ENCODE measurements at regions of chr17 and their contacts with region 1.

Region 1: DNA sequence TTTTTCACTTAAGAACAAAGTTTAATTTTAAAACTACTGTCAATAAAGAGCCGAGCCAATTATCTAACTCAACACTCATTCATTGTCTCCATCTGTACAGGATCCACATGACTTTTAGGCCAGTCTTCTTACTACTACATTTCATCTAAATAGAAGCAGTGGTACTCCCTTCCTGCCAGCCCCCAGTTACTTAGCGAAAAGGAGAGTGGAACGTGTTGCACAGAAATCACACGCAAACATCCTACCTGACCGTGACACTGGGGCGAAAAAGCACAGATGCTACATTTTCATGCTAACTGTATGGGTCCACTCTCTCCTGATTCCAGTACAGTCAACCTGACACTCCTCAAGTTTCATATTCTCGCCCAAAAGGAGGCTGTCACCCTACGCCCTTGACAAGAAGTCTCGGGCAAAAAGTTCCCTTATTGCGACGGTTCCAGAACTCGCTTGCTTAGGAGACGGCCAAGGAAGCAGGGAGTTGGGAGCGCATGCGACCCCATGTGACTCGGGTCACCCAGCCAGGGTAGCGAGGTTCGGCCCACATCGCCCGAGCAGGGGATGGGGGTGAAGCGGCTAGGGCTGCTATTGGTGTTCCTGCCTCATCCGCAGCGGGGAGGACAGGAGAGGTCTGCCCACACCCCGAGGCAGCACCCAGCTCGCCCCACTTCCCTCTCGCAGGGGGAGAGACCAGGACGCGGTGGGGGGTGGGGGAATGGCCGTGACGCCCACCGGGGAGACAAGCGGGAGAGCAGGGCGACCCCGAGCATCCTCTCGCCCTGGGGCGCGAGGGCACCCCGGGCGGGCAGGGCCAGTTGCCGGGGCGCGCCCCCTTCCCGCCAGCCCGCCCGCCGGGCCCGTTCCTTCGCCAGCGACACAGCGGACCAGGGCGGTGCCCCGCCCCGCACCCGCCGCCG is 935 bp downstream of the GNA13 start:
- DNase-seq: peak; percentile 27
- ATAC-seq: peak; percentile 68
- H3K4me3 ChIP-seq: peak overlapping the region; percentile 81 to 98 (median 92)
- H3K27ac ChIP-seq: peak overlapping the region; percentile 96
- H3K4me1 ChIP-seq: peaks cover 36% of the 10 kb centered on the region
- H3K27me3 ChIP-seq: no peaks in the 10 kb centered on the region; a peak in 1 of 5 replicates
- CTCF ChIP-seq: 0 out of 2 replicates have a peak, but pooled peaks have one; percentile 3
- EP300 ChIP-seq: no peak
- POLR2A ChIP-seq: 0 out of 4 replicates have a peak, but pooled peaks of 1 of the 2 experiments have one; percentile 8
- RAD21 ChIP-seq: no peak

Region 2: DNA sequence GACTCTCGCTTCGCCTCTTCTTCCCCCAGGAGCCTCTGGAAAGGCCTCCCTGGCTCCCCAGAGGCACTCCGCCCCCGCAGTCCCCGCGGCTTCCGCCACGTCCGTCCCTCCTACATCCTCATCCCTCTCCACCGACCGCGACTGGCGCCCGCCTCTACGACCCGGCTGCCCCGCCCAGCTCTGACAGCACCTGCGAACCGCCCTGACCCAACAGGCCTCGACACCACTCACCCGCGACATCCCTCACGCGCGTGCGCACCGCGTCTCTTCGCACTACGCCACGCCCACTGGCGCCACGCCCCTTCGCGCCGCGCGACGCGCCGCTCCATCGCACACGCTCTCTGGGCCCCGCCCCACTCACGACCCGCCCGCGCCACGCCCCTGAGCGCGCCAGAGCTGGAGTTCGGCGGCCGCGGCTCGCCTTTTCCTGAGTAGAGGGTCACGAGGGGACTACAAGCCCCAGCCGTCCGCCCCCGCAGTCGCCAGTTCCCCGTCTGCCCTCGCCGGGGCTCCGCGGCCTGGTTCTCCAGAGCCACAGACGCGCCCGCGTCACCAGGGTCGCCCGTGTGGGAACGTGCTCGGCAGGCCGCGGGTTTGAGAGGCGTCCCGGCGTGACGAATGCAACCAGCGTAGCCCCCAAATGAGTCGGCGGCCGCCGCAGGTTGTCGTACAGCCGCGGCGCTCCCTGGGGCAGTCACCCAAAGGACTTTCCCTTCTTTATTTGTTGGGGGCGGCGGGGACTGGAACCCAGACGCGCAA is 80.1 kb before region 1 on chr17:
- CTCF ChIA-PET with region 1: no interaction called
- POLR2A ChIA-PET with region 1: interaction called, 21 read pairs
- in situ Hi-C with region 1: no loop called
- intact Hi-C with region 1: loop called (anchors 10 kb)
- DNase-seq: peak; percentile 87
- ATAC-seq: peak; percentile 93
- H3K4me3 ChIP-seq: peak overlapping the region; percentile 58 to 86 (median 82)
- H3K27ac ChIP-seq: peak overlapping the region; percentile 71
- H3K4me1 ChIP-seq: peaks cover 29% of the 10 kb centered on the region
- H3K27me3 ChIP-seq: no peaks in the 10 kb centered on the region
- CTCF ChIP-seq: no peak; the same call in 1 of the 2 replicates
- EP300 ChIP-seq: no peak
- POLR2A ChIP-seq: peak; percentile 60 to 95
- RAD21 ChIP-seq: peak; percentile 33

Region 3: GRCh38 chr17:65074778-65075250 is 19.2 kb after region 1 on chr17:
- CTCF ChIA-PET with region 1: no interaction called
- POLR2A ChIA-PET with region 1: interaction called, 31 read pairs
- in situ Hi-C with region 1: no loop called
- intact Hi-C with region 1: no loop called
- DNase-seq: peak; percentile 60
- ATAC-seq: peak; percentile 74
- H3K4me3 ChIP-seq: peak overlapping the region; percentile 4 to 24 (median 11); a peak in 4 of 6 replicates
- H3K27ac ChIP-seq: no peak overlapping the region
- H3K4me1 ChIP-seq: peaks cover 37% of the 10 kb centered on the region
- H3K27me3 ChIP-seq: no peaks in the 10 kb centered on the region
- CTCF ChIP-seq: peak; percentile 34; the same call in 1 of the 2 replicates
- EP300 ChIP-seq: 0 out of 4 replicates have a peak, but pooled peaks of 1 of the 2 experiments have one; percentile 15
- POLR2A ChIP-seq: no peak
- RAD21 ChIP-seq: no peak

Region 4: DNA sequence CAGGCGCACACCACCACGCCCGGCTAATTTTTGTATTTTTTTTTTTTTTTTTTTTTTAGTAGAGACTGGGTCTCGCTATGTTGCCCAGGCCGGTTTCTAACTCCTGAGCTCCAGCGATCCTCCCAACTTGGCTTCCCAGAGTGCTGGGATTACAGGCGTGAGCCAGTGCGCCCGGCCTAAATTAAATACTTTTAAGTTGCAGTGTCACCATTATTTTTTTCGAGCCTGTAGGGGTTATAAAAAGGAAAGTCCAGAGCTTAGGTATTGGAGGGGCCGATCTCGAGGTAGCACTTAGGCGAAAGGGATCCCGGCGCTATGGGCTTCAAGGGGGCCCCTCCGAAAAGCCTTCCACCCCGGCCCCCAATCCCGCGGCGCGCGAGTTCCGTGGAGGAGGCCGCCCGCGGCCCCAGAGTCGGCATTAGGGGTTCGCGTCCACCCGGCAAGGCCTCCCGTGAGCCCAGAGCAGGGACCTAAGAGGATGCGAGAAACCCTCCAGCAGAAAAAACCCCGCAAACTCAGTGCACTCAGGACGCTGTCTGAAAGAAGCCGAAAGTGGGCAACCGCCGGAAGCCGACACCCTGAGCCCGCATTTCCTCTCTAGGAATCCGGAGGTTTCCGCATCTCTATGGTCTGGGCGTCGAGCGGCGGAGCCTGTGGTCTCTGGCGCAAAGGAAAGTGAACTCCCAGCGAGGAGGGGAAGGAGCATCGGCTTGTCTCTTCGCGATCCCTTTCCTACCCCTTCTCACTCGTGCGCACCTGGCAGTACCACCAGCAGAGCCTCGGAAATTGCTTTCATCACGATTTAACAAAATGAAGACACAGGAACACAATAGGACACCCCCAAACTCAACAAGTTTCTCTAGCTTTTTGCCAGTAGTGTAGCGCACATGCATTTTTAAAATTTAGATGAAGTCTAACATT is 67.5 kb after region 1 on chr17:
- CTCF ChIA-PET with region 1: no interaction called
- POLR2A ChIA-PET with region 1: interaction called, 11 read pairs
- in situ Hi-C with region 1: no loop called
- intact Hi-C with region 1: no loop called
- DNase-seq: peak; percentile 83
- ATAC-seq: peak; percentile 94
- H3K4me3 ChIP-seq: peak overlapping the region; percentile 53 to 75 (median 67)
- H3K27ac ChIP-seq: peak overlapping the region; percentile 42
- H3K4me1 ChIP-seq: peaks cover 22% of the 10 kb centered on the region
- H3K27me3 ChIP-seq: peaks cover 2 to 7% of the 10 kb centered on the region in 2 experiments; a peak in 3 of 5 replicates
- CTCF ChIP-seq: no peak; the same call in 1 of the 2 replicates
- EP300 ChIP-seq: no peak
- POLR2A ChIP-seq: peak; percentile 76 to 88
- RAD21 ChIP-seq: no peak